H1 (cell line): ENCODE measurements at regions of chr11 and their contacts with region 1.

Region 1: GRCh38 chr11:119315131-119316015 is 1.6 kb downstream of the MCAM start:
- DNase-seq: peak in 1 of 2 experiments; percentile 74
- H3K4me3 ChIP-seq: peak overlapping the region; percentile 55 to 77 (median 66)
- H3K27ac ChIP-seq: no peak overlapping the region
- H3K4me1 ChIP-seq: peaks cover 11 to 50% (median 43%) of the 10 kb centered on the region in 4 experiments
- H3K27me3 ChIP-seq: peaks cover 5 to 46% (median 36%) of the 10 kb centered on the region in 4 experiments
- CTCF ChIP-seq: peak in 1 of 3 experiments; percentile 32; a peak in 1 of 4 replicates
- EP300 ChIP-seq: no peak
- POLR2A ChIP-seq: no peak
- RAD21 ChIP-seq: no peak

Region 2: GRCh38 chr11:118689851-118690552 is 625.4 kb before region 1 on chr11:
- CTCF ChIA-PET with region 1: no interaction called
- POLR2A ChIA-PET with region 1: no interaction called
- DNase-seq: peak; percentile 90 to 99
- H3K4me3 ChIP-seq: peak overlapping the region in 3 of 4 experiments; percentile 54 to 56 (median 54); a peak in 7 of 8 replicates
- H3K27ac ChIP-seq: peak overlapping the region; percentile 43; the same call in 1 of the 2 replicates
- H3K4me1 ChIP-seq: peaks cover 0 to 19% (median 11%) of the 10 kb centered on the region in 4 experiments; a peak in 6 of 7 replicates
- H3K27me3 ChIP-seq: no peaks in the 10 kb centered on the region
- CTCF ChIP-seq: peak; percentile 96 to 100 (median 97)
- EP300 ChIP-seq: no peak
- POLR2A ChIP-seq: no peak
- RAD21 ChIP-seq: peak; percentile 89 to 92

Region 3: GRCh38 chr11:119006656-119007055 is 308.7 kb before region 1 on chr11:
- CTCF ChIA-PET with region 1: no interaction called
- POLR2A ChIA-PET with region 1: no interaction called
- DNase-seq: no peak
- H3K4me3 ChIP-seq: no peak overlapping the region
- H3K27ac ChIP-seq: no peak overlapping the region
- H3K4me1 ChIP-seq: no peaks in the 10 kb centered on the region
- H3K27me3 ChIP-seq: no peaks in the 10 kb centered on the region
- CTCF ChIP-seq: no peak
- EP300 ChIP-seq: no peak
- POLR2A ChIP-seq: no peak
- RAD21 ChIP-seq: no peak

Region 4: DNA sequence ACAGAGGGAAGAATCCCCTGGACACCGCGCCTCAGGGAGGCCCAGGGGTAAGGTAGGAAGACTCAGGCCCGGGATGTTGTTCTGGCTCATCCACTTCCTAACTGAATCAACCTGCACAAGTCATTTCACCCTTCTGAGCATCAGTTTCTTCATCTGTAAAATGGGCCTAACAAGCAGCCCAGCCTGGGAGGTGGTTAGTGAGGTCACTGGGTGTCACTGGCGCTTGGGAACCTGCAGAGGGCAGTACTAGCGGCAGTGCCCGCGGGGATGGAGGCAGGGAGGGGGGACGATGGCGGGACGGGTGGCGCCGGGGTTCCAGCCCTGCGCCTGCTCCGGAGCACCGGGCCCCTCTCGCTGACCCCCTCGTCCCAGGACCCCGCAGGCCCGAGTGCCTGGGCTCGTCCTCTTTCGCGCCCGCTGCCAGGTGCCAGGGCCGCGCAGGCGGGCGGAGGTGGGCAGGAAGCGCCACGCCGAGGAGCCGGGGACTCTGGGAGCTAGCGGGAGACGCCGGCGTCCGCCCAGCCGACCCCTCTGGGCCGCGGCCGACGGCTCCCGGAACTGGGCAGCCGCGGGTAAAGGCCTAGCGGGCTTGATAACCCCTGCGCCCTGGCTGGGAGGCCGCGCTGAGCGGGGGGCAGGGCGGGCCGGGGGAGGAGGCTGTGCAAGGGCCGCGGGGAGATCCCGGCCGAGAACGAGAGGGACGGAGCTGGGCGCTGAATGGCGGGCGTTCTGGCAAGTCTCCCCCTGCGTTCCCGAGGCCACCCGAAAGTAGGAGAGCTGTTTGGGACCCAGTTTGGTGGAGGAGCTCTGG is 146.7 kb before region 1 on chr11 and contains the start of gene NLRX1:
- CTCF ChIA-PET with region 1: no interaction called
- POLR2A ChIA-PET with region 1: interaction called, 10 read pairs
- DNase-seq: peak; percentile 51 to 90
- H3K4me3 ChIP-seq: peak within 1 kb of the TSS; percentile 64 to 87 (median 68)
- H3K27ac ChIP-seq: peak within 1 kb of the TSS; percentile 88
- H3K4me1 ChIP-seq: peaks cover 0 to 4% (median 1%) of the 10 kb centered on the region in 4 experiments; a peak in 4 of 7 replicates
- H3K27me3 ChIP-seq: no peaks in the 10 kb centered on the region
- CTCF ChIP-seq: peak; percentile 82 to 94 (median 90)
- EP300 ChIP-seq: peak in 1 of 2 experiments; percentile 56; a peak in 1 of 3 replicates
- POLR2A ChIP-seq: peak in 1 of 2 experiments; percentile 69; a peak in 2 of 3 replicates
- RAD21 ChIP-seq: peak; percentile 43 to 62; a peak in 3 of 4 replicates
- total RNA-seq, gene NLRX1: 12.9 and 13.2 TPM in 2 replicates

Region 5: DNA sequence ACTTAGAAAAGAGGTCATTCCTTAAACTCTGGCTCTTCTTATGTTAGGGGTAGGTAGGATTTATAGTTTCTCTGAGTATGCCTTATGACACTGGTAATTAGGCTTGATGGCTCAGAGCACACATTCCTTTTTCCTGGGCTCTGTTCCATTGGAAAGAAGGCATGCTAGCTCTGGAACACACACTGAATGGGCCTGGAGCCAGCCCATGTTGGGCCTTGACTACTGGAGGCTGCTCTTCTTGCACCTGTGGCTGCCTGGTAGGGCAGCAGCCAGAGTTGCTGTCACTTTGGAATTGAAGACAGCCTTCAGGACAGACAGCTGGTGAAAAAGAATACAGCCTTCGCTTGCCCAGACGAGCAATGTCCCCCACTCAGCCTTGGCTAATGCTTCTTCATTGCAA is 16.6 kb before region 1 on chr11:
- CTCF ChIA-PET with region 1: interaction called, 174 read pairs
- POLR2A ChIA-PET with region 1: interaction called, 6 read pairs
- DNase-seq: no peak
- H3K4me3 ChIP-seq: no peak overlapping the region
- H3K27ac ChIP-seq: no peak overlapping the region
- H3K4me1 ChIP-seq: no peaks in the 10 kb centered on the region
- H3K27me3 ChIP-seq: no peaks in the 10 kb centered on the region
- CTCF ChIP-seq: no peak
- EP300 ChIP-seq: no peak
- POLR2A ChIP-seq: no peak
- RAD21 ChIP-seq: no peak

Region 6: GRCh38 chr11:119334174-119334930 is 19.0 kb after region 1 on chr11 and contains the start of gene RNF26:
- CTCF ChIA-PET with region 1: interaction called, 415 read pairs
- POLR2A ChIA-PET with region 1: interaction called, 29 read pairs
- DNase-seq: peak; percentile 95 to 98
- H3K4me3 ChIP-seq: peak within 1 kb of the TSS; percentile 92 to 96 (median 96)
- H3K27ac ChIP-seq: peak within 1 kb of the TSS; percentile 89
- H3K4me1 ChIP-seq: peaks cover 4 to 24% (median 18%) of the 10 kb centered on the region in 4 experiments
- H3K27me3 ChIP-seq: peaks cover 3 to 8% (median 6%) of the 10 kb centered on the region in 4 experiments; a peak in 6 of 7 replicates
- CTCF ChIP-seq: no peak
- EP300 ChIP-seq: no peak
- POLR2A ChIP-seq: peak in 1 of 2 experiments; percentile 88; a peak in 2 of 3 replicates
- RAD21 ChIP-seq: no peak
- total RNA-seq, gene RNF26: 82.7 and 86.6 TPM in 2 replicates

Region 7: GRCh38 chr11:119339589-119340343 is 24.4 kb after region 1 on chr11:
- CTCF ChIA-PET with region 1: interaction called, 415 read pairs
- POLR2A ChIA-PET with region 1: interaction called, 29 read pairs
- DNase-seq: peak in 1 of 2 experiments; percentile 94
- H3K4me3 ChIP-seq: peak overlapping the region; percentile 34 to 69 (median 43)
- H3K27ac ChIP-seq: no peak overlapping the region
- H3K4me1 ChIP-seq: peaks cover 5 to 37% (median 28%) of the 10 kb centered on the region in 4 experiments
- H3K27me3 ChIP-seq: peaks cover 12 to 42% (median 33%) of the 10 kb centered on the region in 4 experiments
- CTCF ChIP-seq: peak in 2 of 3 experiments; percentile 71 to 86; a peak in 3 of 4 replicates
- EP300 ChIP-seq: peak in 1 of 2 experiments; percentile 52; a peak in 1 of 3 replicates
- POLR2A ChIP-seq: no peak
- RAD21 ChIP-seq: peak; percentile 54 to 70